Naive thymus-derived CD4-positive, alpha-beta T cell (primary cell): ENCODE measurements at regions of chr1 and their contacts with region 1.

Region 1: GRCh38 chr1:204544321-204544720 is 28.1 kb downstream of the MDM4 start:
- DNase-seq: peak in 7 of 9 donors; percentile 47 to 76 (median 67)
- ATAC-seq: peak; percentile 96
- H3K4me3 ChIP-seq: no peak overlapping the region
- H3K4me3 Mint-ChIP-seq: peak overlapping the region; percentile 0 to 77 (median 60)
- H3K27ac ChIP-seq: peak overlapping the region; percentile 63
- H3K27ac Mint-ChIP-seq: peak overlapping the region; percentile 51 to 94 (median 81)
- H3K4me1 ChIP-seq: peaks cover 30 to 39% of the 10 kb centered on the region in 2 donors
- H3K4me1 Mint-ChIP-seq: peaks cover 29 to 71% (median 65%) of the 10 kb centered on the region in 7 donors
- H3K27me3 ChIP-seq: no peaks in the 10 kb centered on the region
- H3K27me3 Mint-ChIP-seq: no peaks in the 10 kb centered on the region

Region 2: DNA sequence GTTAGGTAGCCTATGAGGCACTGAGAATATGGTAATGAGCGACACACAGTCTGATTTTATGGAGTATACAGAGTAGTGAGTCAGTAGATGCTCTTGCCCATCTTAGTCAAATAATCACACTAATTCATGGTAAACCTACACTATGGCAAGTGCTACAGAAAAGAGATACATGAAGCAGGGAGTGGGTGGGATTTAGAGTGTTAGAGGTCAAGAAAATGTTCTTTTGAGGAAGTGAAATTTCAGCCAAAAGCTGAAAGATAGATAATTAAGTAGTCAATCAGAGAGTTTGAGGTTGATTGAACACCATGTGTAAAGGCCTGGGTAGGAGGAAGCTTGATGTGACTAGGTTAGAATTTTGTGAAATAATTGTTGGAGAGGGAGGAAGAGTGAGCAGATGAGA is 13.4 kb before region 1 on chr1:
- CTCF ChIA-PET with region 1: interaction called, 3 read pairs
- POLR2A ChIA-PET with region 1: interaction called, 5 read pairs
- intact Hi-C with region 1: loop called in 1 of 2 experiments (anchors 1 kb)
- DNase-seq: no peak
- ATAC-seq: no peak
- H3K4me3 ChIP-seq: no peak overlapping the region
- H3K4me3 Mint-ChIP-seq: no peak overlapping the region
- H3K27ac ChIP-seq: peak overlapping the region; percentile 15
- H3K27ac Mint-ChIP-seq: peak overlapping the region in 7 of 9 donors; percentile 1 to 67 (median 27)
- H3K4me1 ChIP-seq: peaks cover 0 to 9% of the 10 kb centered on the region in 2 donors
- H3K4me1 Mint-ChIP-seq: peaks cover 14 to 56% (median 29%) of the 10 kb centered on the region in 7 donors
- H3K27me3 ChIP-seq: no peaks in the 10 kb centered on the region
- H3K27me3 Mint-ChIP-seq: no peaks in the 10 kb centered on the region

Region 3: DNA sequence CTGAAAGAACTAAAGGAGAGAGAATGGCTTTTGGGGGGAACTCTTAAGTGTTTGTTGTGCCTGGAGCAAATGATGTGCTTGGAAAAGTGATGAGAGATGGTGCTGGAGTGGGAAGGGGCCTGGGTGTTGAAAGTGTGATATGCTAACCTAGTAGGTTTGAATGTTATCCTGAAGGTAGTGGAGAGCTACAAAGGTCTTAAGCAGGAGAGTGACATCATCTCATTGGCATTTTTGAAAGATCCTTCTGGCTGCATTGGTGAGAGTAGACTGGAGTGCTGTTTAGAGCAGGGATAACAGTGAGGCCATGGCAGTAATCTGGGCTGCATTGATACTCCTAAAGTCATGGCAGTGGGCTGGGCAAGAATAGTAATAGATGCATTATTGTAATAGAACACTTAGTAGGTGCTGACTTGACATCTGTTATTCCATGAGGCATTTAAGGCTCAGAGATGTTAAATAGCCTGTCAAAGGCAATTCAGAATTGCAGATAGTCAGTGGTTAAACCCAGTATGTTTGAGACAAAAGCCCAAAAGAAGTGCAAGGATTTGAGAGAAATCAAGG is 16.3 kb after region 1 on chr1:
- CTCF ChIA-PET with region 1: interaction called, 3 read pairs
- POLR2A ChIA-PET with region 1: interaction called, 28 read pairs
- intact Hi-C with region 1: loop called (anchors 1 to 2 kb)
- DNase-seq: no peak
- ATAC-seq: no peak
- H3K4me3 ChIP-seq: no peak overlapping the region
- H3K4me3 Mint-ChIP-seq: peak overlapping the region in 1 of 10 donors; percentile 6
- H3K27ac ChIP-seq: no peak overlapping the region
- H3K27ac Mint-ChIP-seq: peak overlapping the region in 7 of 9 donors; percentile 30 to 82 (median 62)
- H3K4me1 ChIP-seq: peaks cover 12 to 52% of the 10 kb centered on the region in 2 donors
- H3K4me1 Mint-ChIP-seq: peaks cover 30 to 87% (median 71%) of the 10 kb centered on the region in 7 donors
- H3K27me3 ChIP-seq: no peaks in the 10 kb centered on the region
- H3K27me3 Mint-ChIP-seq: no peaks in the 10 kb centered on the region

Region 4: GRCh38 chr1:204578867-204579664 is 34.7 kb after region 1 on chr1:
- CTCF ChIA-PET with region 1: no interaction called
- POLR2A ChIA-PET with region 1: no interaction called
- intact Hi-C with region 1: loop called in 1 of 2 experiments (anchors 2 kb)
- DNase-seq: peak in 5 of 9 donors; percentile 21 to 44 (median 27)
- ATAC-seq: peak; percentile 60
- H3K4me3 ChIP-seq: peak overlapping the region; percentile 47
- H3K4me3 Mint-ChIP-seq: peak overlapping the region; percentile 77 to 88 (median 82)
- H3K27ac ChIP-seq: peak overlapping the region; percentile 67
- H3K27ac Mint-ChIP-seq: peak overlapping the region; percentile 83 to 97 (median 89)
- H3K4me1 ChIP-seq: peaks cover 9 to 26% of the 10 kb centered on the region in 2 donors
- H3K4me1 Mint-ChIP-seq: peaks cover 14 to 43% (median 35%) of the 10 kb centered on the region in 7 donors
- H3K27me3 ChIP-seq: no peaks in the 10 kb centered on the region
- H3K27me3 Mint-ChIP-seq: no peaks in the 10 kb centered on the region